ENCODE measurements at regions of chr14 and their contacts with region 1.

Region 1: GRCh38 chr14:51684760-51685159 is 33.0 kb downstream of the FRMD6 start:
- DNase-seq: no peak
- ATAC-seq: no peak
- H3K4me3 ChIP-seq: no peak overlapping the region
- H3K4me3 Mint-ChIP-seq: no peak overlapping the region
- H3K27ac ChIP-seq: no peak overlapping the region
- H3K27ac Mint-ChIP-seq: no peak overlapping the region
- H3K4me1 ChIP-seq: no peaks in the 10 kb centered on the region
- H3K4me1 Mint-ChIP-seq: no peaks in the 10 kb centered on the region
- H3K27me3 ChIP-seq: no peaks in the 10 kb centered on the region
- H3K27me3 Mint-ChIP-seq: peaks cover 4% of the 10 kb centered on the region
- CTCF ChIP-seq: no peak

Region 2: GRCh38 chr14:51643140-51643539 is 41.6 kb before region 1 on chr14:
- CTCF ChIA-PET with region 1: no interaction called
- POLR2A ChIA-PET with region 1: no interaction called
- intact Hi-C with region 1: loop called in 1 of 2 experiments (anchors 5 kb)
- DNase-seq: no peak
- ATAC-seq: no peak
- H3K4me3 ChIP-seq: no peak overlapping the region
- H3K4me3 Mint-ChIP-seq: no peak overlapping the region
- H3K27ac ChIP-seq: no peak overlapping the region
- H3K27ac Mint-ChIP-seq: no peak overlapping the region
- H3K4me1 ChIP-seq: no peaks in the 10 kb centered on the region
- H3K4me1 Mint-ChIP-seq: no peaks in the 10 kb centered on the region
- H3K27me3 ChIP-seq: no peaks in the 10 kb centered on the region
- H3K27me3 Mint-ChIP-seq: peaks cover 2% of the 10 kb centered on the region
- CTCF ChIP-seq: no peak

Region 3: GRCh38 chr14:52759145-52759544 is 1074.4 kb after region 1 on chr14:
- CTCF ChIA-PET with region 1: no interaction called
- POLR2A ChIA-PET with region 1: no interaction called
- intact Hi-C with region 1: no loop called
- DNase-seq: no peak
- ATAC-seq: no peak
- H3K4me3 ChIP-seq: no peak overlapping the region
- H3K4me3 Mint-ChIP-seq: no peak overlapping the region
- H3K27ac ChIP-seq: no peak overlapping the region
- H3K27ac Mint-ChIP-seq: no peak overlapping the region
- H3K4me1 ChIP-seq: no peaks in the 10 kb centered on the region
- H3K4me1 Mint-ChIP-seq: peaks cover 13% of the 10 kb centered on the region
- H3K27me3 ChIP-seq: no peaks in the 10 kb centered on the region
- H3K27me3 Mint-ChIP-seq: no peaks in the 10 kb centered on the region
- CTCF ChIP-seq: no peak

Measured in CD8-positive, alpha-beta T cell (primary cell).